Calu3 (cell line): ENCODE measurements at regions of chr7 and their contacts with region 1.

Region 1: GRCh38 chr7:111103678-111104274 is 12.8 kb downstream of the LRRN3 start:
- DNase-seq: no peak
- H3K4me3 Mint-ChIP-seq: no peak overlapping the region
- H3K27ac Mint-ChIP-seq: no peak overlapping the region
- H3K4me1 Mint-ChIP-seq: peaks cover 43% of the 10 kb centered on the region
- H3K27me3 Mint-ChIP-seq: no peaks in the 10 kb centered on the region
- CTCF ChIP-seq: no peak

Region 2: DNA sequence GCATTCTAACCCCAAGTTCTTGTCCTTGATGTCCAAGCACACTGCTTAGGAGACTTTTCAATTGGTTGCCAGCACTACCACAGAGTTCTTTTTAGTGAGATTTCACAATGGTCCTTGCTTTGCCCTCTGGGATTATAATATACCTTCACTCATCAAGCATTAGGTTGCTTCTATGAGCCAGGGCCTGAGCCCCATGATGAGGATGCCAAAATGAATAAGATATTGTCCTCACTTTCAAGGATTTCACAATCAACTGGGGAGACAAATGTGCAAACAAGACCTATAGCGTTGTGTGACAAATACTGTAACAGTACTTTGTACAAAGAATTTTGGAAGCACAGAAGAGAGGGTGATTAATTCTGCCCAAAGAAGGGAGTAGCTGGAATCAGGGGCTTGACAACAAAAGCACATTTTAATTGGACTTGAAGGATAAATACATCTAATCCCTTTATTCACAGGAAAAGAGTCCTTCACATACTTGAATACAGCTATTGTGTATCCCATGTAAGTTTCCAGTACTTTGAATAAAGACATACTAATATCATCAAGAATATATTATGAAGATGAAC is 276.4 kb before region 1 on chr7:
- CTCF ChIA-PET with region 1: no interaction called
- intact Hi-C with region 1: no loop called
- DNase-seq: no peak
- H3K4me3 Mint-ChIP-seq: no peak overlapping the region
- H3K27ac Mint-ChIP-seq: no peak overlapping the region
- H3K4me1 Mint-ChIP-seq: no peaks in the 10 kb centered on the region
- H3K27me3 Mint-ChIP-seq: no peaks in the 10 kb centered on the region
- CTCF ChIP-seq: no peak

Region 3: DNA sequence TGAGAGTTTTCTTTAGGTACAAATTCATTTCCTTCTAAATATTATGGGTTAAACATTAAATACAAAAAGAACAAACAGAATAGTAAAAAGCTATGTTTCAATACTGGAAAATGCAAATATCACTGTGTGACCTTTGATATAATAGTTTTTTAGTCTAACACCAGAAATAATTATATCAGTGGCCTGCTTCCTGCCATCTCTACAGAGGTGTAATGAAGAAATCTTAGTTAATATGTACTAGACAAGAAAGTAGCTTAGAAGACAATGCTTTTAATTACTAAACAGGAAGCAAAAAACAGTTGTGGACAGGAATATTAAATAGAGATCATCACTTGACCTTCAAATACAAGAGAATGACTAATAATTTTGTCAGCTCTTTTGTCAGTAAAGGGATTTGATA is 60.2 kb before region 1 on chr7:
- CTCF ChIA-PET with region 1: no interaction called
- intact Hi-C with region 1: loop called (anchors 2 kb)
- DNase-seq: no peak
- H3K4me3 Mint-ChIP-seq: no peak overlapping the region
- H3K27ac Mint-ChIP-seq: no peak overlapping the region
- H3K4me1 Mint-ChIP-seq: peaks cover 9% of the 10 kb centered on the region
- H3K27me3 Mint-ChIP-seq: no peaks in the 10 kb centered on the region
- CTCF ChIP-seq: no peak

Region 4: GRCh38 chr7:111198255-111198654 is 94.5 kb after region 1 on chr7:
- CTCF ChIA-PET with region 1: no interaction called
- intact Hi-C with region 1: loop called (anchors 5 kb)
- DNase-seq: peak; percentile 64
- H3K4me3 Mint-ChIP-seq: peak overlapping the region; percentile 1
- H3K27ac Mint-ChIP-seq: peak overlapping the region; percentile 76
- H3K4me1 Mint-ChIP-seq: peaks cover 13% of the 10 kb centered on the region
- H3K27me3 Mint-ChIP-seq: no peaks in the 10 kb centered on the region
- CTCF ChIP-seq: no peak

Region 5: DNA sequence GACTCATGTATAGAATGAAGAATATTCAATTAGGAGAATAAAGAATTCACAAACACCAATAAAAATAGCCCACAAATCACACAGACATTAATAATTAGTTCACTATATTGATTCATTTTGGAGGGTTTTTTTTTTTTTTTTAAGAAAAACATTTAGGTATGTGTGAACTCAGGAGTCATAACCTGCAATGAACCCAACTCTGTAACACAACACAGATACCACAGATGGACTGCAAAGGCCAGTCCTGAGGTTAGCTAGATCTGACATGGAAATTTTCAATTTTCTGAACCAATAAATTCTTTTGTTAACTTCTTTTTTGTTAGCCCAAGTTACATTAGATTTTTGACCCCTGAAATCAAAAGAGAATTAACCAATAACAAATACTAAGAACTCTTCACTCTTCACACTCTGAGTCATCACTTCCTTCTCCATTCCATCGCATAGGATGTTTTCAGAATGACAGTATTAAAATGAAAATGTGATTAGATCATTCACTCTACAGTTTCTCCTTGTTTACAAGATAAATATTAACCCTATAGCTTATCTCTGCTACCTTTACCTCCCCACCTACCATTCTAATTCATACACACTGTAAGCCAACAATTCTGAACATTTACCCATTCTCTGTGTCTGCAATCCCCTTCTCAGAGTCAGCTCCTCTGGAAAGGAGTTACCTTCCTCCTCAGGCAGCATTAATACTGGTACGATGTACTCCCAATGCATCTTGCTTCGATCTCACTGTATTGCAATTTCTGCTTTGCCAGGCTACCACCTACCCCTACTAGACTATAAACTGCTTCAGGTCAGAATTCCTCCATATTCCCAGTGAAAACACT is 128.7 kb after region 1 on chr7:
- CTCF ChIA-PET with region 1: no interaction called
- intact Hi-C with region 1: loop called (anchors 5 kb)
- DNase-seq: no peak
- H3K4me3 Mint-ChIP-seq: peak overlapping the region; percentile 63
- H3K27ac Mint-ChIP-seq: peak overlapping the region; percentile 90
- H3K4me1 Mint-ChIP-seq: peaks cover 27% of the 10 kb centered on the region
- H3K27me3 Mint-ChIP-seq: no peaks in the 10 kb centered on the region
- CTCF ChIP-seq: no peak

Region 6: GRCh38 chr7:111561885-111562732 is 458.3 kb after region 1 on chr7 and contains the start of gene IMMP2L:
- CTCF ChIA-PET with region 1: no interaction called
- intact Hi-C with region 1: loop called (anchors 5 kb)
- DNase-seq: peak; percentile 94
- H3K4me3 Mint-ChIP-seq: peak within 1 kb of the TSS; percentile 84
- H3K27ac Mint-ChIP-seq: peak within 1 kb of the TSS; percentile 85
- H3K4me1 Mint-ChIP-seq: no peaks in the 10 kb centered on the region
- H3K27me3 Mint-ChIP-seq: no peaks in the 10 kb centered on the region
- CTCF ChIP-seq: no peak
- total RNA-seq, gene IMMP2L: 28.6 and 38.8 TPM in 2 replicates